Activated T-helper 2 cell treated with anti-CD3 and anti-CD28 coated beads, Interferon-gamma antibody, Interleukin-2, Interleukin-4, amounts not matched to agents 10 μg/mL and 5 μg/mL and 100 μg/mL, durations not matched to agents 14 hours and 24 hours and 36 hours (primary cell): ENCODE measurements at regions of chr10 and their contacts with region 1.

Region 1: DNA sequence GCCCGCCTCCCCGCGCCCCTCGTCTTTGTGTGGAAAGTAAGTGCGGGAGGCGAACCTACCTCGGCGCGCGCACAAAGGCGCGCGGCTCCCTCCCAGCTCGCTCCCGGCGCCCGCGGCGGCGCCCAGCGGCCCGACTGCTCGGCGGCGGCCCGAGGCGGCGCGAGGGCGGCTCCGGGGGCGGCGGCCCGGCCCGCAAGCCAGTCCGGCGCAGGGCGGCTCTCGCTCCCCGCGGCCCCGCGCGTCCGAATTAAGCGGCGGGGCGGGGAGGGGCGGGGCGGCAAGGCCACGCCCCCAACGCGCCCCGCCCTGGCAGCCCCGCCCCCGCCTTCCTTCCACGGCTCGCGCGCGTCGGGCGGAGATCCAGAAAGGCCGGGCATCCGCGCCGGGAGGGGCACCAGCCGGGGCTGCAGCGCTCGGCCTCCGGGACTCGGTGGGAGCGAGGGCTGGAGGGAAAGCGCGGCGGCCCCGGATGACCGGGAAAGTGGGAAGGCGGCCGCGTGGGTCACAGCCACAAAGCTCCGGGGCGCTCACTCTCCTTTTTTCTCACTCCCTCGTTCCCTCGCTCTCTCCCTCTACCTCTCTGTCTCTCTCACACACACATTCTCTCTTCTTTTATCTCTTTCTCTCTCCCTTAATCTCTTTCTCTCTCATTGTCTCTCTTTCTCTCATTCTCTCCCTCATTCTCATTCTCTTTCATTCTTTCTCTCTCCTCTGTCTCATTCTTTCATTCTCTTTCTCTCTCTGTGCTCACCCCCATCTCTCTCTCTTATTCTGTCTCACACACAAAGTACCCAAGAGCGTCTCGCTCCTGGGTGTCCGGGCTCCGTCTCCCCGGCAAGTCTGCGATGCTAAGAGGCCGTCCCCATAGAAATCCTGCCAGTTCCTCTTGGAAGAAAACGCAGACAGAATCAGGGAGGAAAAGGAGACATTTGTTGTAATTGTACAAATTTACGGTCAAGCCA is 170.2 kb downstream of the FAM107B start:
- DNase-seq: peak; percentile 65
- H3K4me3 Mint-ChIP-seq: peak overlapping the region; percentile 97
- H3K27ac Mint-ChIP-seq: peak overlapping the region; percentile 93
- H3K4me1 Mint-ChIP-seq: peaks cover 74% of the 10 kb centered on the region
- H3K27me3 Mint-ChIP-seq: no peaks in the 10 kb centered on the region

Region 2: GRCh38 chr10:14560274-14560673 is 44.2 kb before region 1 on chr10:
- intact Hi-C with region 1: loop called (anchors 1 kb)
- DNase-seq: peak; percentile 52
- H3K4me3 Mint-ChIP-seq: peak overlapping the region; percentile 38
- H3K27ac Mint-ChIP-seq: peak overlapping the region; percentile 84
- H3K4me1 Mint-ChIP-seq: peaks cover 83% of the 10 kb centered on the region
- H3K27me3 Mint-ChIP-seq: no peaks in the 10 kb centered on the region

Region 3: DNA sequence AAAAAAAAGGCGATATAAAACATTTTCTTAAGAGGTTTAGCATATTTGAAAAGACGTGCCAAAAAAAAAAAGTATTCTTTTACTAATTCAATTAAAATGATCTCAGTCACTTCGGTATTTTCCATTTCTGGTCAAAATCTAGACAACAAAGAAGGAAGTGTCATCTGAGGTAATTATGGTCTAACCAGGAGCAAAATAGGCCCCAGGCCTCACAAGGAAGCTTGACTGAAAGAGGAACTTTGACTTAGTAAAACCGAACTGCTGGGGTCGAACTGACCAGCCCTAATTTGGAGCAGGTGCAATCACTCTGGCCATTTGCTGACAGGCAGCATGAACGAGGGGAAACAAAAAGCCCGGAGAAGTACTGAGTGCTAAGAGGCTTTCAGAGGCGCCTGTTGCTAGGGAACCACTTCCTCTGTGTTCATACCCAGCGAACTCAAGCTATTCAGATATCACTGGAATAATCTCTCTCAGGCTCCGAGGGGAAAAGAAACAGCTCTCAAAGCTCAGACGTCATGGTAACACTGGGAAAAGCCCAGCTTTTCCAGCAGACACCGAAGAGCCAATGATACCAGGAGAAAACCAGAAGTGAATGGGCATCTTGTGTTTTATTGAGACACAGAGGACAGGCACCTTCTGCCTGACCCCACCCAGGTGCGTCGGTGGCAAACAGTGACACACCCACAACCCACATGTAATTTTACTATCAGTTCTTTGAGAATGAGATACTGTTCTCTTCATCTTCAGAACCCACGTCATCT is 43.7 kb after region 1 on chr10:
- intact Hi-C with region 1: loop called (anchors 1 kb)
- DNase-seq: peak; percentile 73
- H3K4me3 Mint-ChIP-seq: peak overlapping the region; percentile 63
- H3K27ac Mint-ChIP-seq: peak overlapping the region; percentile 96
- H3K4me1 Mint-ChIP-seq: peaks cover 68% of the 10 kb centered on the region
- H3K27me3 Mint-ChIP-seq: no peaks in the 10 kb centered on the region

Region 4: DNA sequence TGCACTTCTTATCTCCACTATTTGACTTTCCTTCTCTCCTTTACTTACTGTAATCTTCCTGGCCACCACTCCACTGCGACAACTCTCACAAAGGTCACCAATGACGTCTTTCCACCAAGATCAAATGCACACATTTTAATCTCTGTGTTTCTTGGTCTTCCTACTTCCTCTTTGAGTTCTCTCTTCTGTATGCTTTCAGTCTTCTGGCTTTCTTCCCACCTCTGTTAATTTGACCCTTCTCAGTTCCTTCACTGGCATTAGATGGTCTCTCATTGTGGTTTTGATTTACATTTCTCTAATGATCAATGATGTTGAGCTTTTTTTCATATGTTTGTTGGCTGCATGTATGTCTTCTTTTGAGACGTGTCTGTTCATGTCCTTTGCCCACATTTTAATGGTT is 138.4 kb after region 1 on chr10:
- intact Hi-C with region 1: loop called (anchors 1 kb)
- DNase-seq: no peak
- H3K4me3 Mint-ChIP-seq: peak overlapping the region; percentile 3
- H3K27ac Mint-ChIP-seq: peak overlapping the region; percentile 76
- H3K4me1 Mint-ChIP-seq: peaks cover 33% of the 10 kb centered on the region
- H3K27me3 Mint-ChIP-seq: no peaks in the 10 kb centered on the region

Region 5: DNA sequence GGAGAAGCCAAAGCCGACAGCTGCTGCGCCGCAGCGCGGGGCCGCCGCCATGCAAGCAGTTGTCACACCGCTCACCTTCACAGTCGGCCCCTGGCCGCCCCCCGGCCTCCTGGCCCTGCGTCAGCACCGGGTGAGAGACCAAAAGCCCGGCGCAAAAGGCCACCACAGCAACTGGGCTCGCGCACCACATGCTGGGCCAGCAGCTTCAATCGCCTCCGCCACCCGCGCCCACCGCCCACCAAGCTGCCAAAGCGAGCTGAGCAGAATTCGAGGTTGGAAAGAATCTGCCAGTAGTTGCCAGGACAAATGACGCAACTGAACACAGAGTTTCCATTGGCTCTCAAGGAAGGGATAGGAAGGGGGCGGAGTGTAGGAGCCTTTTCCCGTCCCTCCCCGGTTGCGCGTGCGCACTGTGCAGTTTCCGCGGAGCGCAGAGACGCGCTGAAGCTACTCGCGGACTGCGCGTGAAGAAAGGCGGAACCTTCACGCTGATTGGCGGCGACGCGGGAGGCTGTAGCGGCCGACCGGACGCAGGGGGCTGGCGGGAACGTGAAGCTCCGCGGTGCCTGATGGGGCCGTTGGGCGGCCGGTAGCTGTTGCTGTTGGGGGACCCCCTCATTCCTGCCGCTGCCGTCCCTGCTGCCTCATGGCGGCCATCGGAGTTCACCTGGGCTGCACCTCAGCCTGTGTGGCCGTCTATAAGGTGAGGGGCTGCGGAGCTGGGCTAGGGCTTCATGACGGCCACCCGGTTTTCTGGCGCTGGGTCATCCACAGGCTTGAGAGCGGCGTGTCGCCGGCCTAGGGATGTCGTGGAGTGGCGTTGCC is 233.5 kb after region 1 on chr10 and contains the starts of genes CDNF, HSPA14 and MSANTD7:
- intact Hi-C with region 1: loop called (anchors 1 kb)
- DNase-seq: peak; percentile 100
- H3K4me3 Mint-ChIP-seq: peak within 1 kb of the TSS; percentile 92
- H3K27ac Mint-ChIP-seq: peak within 1 kb of the TSS; percentile 95
- H3K4me1 Mint-ChIP-seq: peaks cover 19% of the 10 kb centered on the region
- H3K27me3 Mint-ChIP-seq: no peaks in the 10 kb centered on the region
- total RNA-seq, gene CDNF: 0.39 and 0.67 TPM in 2 replicates
- total RNA-seq, gene HSPA14: 34.1 and 34.5 TPM in 2 replicates
- total RNA-seq, gene MSANTD7: 22.3 and 25.6 TPM in 2 replicates

Region 6: GRCh38 chr10:14954001-14954770 is 349.7 kb after region 1 on chr10 and contains the start of gene DCLRE1C:
- intact Hi-C with region 1: loop called (anchors 5 kb)
- DNase-seq: peak; percentile 89
- H3K4me3 Mint-ChIP-seq: peak within 1 kb of the TSS; percentile 89
- H3K27ac Mint-ChIP-seq: peak within 1 kb of the TSS; percentile 93
- H3K4me1 Mint-ChIP-seq: peaks cover 44% of the 10 kb centered on the region
- H3K27me3 Mint-ChIP-seq: no peaks in the 10 kb centered on the region
- total RNA-seq, gene DCLRE1C: 20.5 and 21.0 TPM in 2 replicates